Uterus (tissue), 4 donors: ENCODE measurements at regions of chrX and their contacts with region 1.

Region 1: GRCh38 chrX:49637686-49638085 is 38.9 kb downstream of the GAGE1 start:
- DNase-seq: no peak
- H3K4me3 ChIP-seq: no peak overlapping the region
- H3K27ac ChIP-seq: no peak overlapping the region
- H3K4me1 ChIP-seq: no peaks in the 10 kb centered on the region
- H3K27me3 ChIP-seq: no peaks in the 10 kb centered on the region
- CTCF ChIP-seq: no peak
- POLR2A ChIP-seq: no peak

Region 2: GRCh38 chrX:49675075-49675719 is 37.5 kb after region 1 on chrX:
- intact Hi-C with region 1: loop called (anchors 10 kb)
- DNase-seq: no peak
- H3K4me3 ChIP-seq: no peak overlapping the region
- H3K27ac ChIP-seq: no peak overlapping the region
- H3K4me1 ChIP-seq: no peaks in the 10 kb centered on the region
- H3K27me3 ChIP-seq: no peaks in the 10 kb centered on the region
- CTCF ChIP-seq: no peak
- POLR2A ChIP-seq: no peak